ENCODE measurements at regions of chr11 and their contacts with region 1.

Region 1: DNA sequence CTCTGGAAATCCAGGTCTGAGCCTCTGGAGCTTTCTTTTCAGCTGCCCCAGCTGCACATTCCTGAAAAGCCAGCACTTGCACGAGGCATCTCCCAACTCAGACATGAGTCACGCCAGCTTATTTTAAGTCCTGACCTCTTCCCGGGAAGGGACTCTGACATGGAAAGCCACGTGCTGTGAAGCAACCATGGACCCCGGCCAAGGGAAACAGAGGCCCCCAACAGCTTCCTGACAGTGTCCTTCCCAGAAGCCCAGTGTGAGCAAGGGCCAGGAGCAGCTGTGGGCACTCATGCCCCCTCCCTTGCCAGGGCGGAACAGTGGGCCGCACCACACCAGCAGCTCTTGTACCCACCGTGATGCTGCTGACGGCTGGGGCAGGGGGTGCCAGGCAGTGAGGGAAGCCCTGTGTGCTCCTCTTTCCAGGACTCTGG is 118.8 kb upstream of the CADM1 start:
- DNase-seq: peak; percentile 72 to 86
- ATAC-seq: peak; percentile 99 to 100
- H3K4me3 ChIP-seq: no peak overlapping the region
- H3K27ac ChIP-seq: peak overlapping the region; percentile 57 to 74 (median 68)
- H3K4me1 ChIP-seq: peaks cover 11 to 12% of the 10 kb centered on the region in 2 donors
- H3K27me3 ChIP-seq: no peaks in the 10 kb centered on the region
- CTCF ChIP-seq: peak in 1 of 5 experiments; percentile 20
- POLR2A ChIP-seq: no peak

Region 2: DNA sequence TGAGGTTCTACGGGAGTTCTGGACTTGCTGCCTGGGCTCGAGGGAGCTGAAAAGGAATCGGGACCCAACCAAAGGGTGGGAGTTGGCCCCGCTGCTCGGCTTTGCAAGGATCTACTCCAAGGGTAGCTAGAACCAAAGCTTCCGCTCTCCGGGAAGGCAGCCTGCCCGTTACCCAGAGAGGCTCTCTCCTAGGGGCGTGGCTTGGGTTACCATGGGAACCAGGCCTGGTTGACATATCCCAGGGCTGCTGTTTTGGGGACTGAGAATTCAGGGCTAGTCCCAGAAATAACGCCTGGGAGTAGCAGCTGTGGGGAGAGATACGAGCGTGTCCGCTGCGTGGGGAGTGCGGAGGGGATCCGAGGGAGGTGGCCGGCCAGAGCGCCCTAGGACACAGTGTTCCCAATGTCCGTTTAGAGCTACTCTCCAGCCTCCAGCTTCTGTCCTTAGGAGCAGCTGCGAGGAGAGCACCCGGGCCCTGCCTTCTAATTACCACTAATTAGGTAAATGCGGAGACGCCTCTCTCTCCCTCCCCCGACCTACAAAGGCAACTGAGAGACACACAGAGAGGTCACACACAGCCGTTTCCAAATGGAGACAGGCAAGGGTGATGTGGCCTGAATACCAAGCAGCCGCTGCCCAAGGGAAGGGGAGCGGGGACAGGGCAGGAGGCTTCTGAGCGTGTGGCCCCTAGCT is 22.7 kb after region 1 on chr11:
- in situ Hi-C with region 1: no loop called
- intact Hi-C with region 1: no loop called
- DNase-seq: no peak
- ATAC-seq: no peak
- H3K4me3 ChIP-seq: no peak overlapping the region
- H3K27ac ChIP-seq: no peak overlapping the region
- H3K4me1 ChIP-seq: no peaks in the 10 kb centered on the region
- H3K27me3 ChIP-seq: no peaks in the 10 kb centered on the region
- CTCF ChIP-seq: no peak
- POLR2A ChIP-seq: no peak

Region 3: GRCh38 chr11:115665175-115665821 is 42.3 kb after region 1 on chr11:
- in situ Hi-C with region 1: no loop called
- intact Hi-C with region 1: loop called (anchors 2 kb)
- DNase-seq: no peak
- ATAC-seq: no peak
- H3K4me3 ChIP-seq: no peak overlapping the region
- H3K27ac ChIP-seq: peak overlapping the region in 1 of 4 donors; percentile 11
- H3K4me1 ChIP-seq: peaks cover 0 to 3% of the 10 kb centered on the region in 2 donors
- H3K27me3 ChIP-seq: peaks cover 0 to 6% (median 0%) of the 10 kb centered on the region in 3 donors
- CTCF ChIP-seq: no peak
- POLR2A ChIP-seq: no peak